ENCODE measurements at regions of chr11 and their contacts with region 1.

Region 1: DNA sequence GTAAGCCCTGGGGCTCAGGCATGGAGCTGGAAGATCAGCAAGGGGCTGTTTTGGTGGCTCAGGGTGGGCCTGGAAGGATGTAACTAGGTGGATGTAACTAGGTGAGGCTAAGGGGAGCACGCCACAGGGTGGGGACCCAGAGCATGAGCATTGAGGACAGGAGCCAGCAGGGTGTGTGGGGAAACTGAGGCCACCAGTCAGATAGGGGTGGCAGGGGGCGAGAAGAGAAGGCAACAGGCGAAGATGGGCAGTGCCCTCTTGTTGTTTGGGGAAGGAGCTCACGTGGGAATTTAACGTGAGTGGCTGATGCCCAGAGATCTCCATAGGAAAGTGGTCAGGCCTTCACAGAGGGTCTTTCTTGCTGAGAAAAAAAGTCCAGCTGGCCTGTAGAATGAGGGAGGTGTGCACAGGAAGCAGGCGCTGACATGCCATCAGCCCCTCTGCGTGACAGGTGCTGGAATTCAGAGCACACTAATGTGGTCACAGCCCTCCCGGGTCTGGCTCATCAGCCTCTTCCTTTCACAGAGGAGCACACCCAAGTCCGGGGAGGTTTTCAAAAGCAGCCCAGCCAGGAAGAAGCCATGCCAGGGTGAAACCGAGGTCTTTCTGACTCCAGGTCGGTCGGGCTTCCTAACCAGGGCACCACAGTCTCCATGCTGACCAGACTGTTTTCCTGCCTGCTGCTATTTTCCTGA is 54.6 kb upstream of the PAX6 start:
- ATAC-seq: no peak
- H3K4me3 ChIP-seq: no peak overlapping the region
- H3K27ac ChIP-seq: no peak overlapping the region
- H3K4me1 ChIP-seq: peaks cover 0 to 2% of the 10 kb centered on the region in 2 donors

Region 2: GRCh38 chr11:31240338-31240904 is 625.3 kb before region 1 on chr11:
- in situ Hi-C with region 1: loop called in 1 of 9 experiments (anchors 10 kb)
- ATAC-seq: peak; percentile 45 to 73 (median 61)
- H3K4me3 ChIP-seq: no peak overlapping the region
- H3K27ac ChIP-seq: no peak overlapping the region
- H3K4me1 ChIP-seq: peaks cover 6 to 39% of the 10 kb centered on the region in 2 donors

Region 3: DNA sequence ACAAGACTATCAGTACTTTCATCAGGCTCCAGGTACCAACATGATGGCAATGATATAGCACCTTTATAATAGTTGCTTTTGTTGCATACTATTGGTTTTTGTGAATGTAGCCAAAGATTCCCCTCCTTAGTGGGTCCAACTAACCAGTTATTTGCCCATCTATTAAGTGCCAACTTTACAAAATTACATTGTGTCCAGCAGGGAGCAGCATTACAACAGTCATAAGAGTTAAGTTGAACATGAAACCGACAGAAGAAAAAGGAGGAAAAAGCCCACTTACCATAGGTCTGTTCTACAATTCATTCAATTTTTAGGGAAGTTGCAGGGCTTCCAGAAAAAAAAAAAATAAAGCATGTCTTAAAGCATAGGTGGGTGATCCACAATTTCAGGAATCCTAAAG is 377.9 kb before region 1 on chr11:
- in situ Hi-C with region 1: loop called in 2 of 9 experiments (anchors 10 to 25 kb)
- ATAC-seq: peak in 3 of 8 experiments; percentile 26 to 38 (median 37)
- H3K4me3 ChIP-seq: no peak overlapping the region
- H3K27ac ChIP-seq: no peak overlapping the region
- H3K4me1 ChIP-seq: no peaks in the 10 kb centered on the region